ENCODE measurements at regions of chr11 and their contacts with region 1.

Region 1: DNA sequence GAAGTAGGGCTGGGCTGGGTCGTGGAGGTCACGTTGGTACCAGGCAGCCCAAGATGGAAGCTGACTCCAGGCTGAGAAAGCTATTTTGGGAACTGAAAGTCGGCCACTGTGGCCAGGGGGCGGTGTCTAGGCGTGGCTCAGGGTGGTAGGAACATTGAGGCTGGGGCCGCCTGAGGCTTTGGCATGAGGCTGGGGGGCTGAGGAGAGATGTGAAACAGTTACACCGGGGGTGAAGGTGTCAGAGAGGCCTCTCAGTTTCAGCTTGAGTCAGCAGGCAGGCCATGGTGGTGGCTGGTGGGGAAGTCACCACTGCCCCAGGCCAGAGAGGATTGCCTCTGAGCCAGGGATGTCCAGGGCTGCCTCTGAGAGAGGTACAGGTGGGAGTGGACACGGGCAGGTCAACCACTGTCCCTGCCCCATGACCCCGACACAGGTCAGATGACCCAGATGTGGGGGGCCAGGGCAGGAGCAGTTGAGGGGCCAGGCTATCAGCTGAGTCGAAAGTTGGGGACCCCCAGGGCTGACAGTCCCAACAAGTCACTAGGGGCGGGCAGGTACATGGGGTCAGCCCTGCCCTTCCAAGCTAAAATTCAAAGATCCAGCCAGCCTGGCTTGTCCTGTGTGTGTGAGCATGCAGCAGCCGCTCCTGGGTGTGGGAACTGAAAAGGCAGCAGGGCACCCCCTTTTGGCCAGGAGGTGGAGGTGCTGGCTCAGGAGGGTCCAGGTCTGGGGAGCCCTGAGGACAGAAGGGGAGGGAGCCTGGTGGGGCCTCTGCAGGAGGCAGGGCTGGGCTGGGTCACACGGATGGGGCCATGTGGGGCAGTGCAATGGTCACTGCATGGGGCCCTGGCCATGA is 7.2 kb downstream of the KCNK7 start:
- DNase-seq: peak; percentile 78 to 82 (median 78)
- H3K4me3 ChIP-seq: no peak overlapping the region
- H3K4me3 Mint-ChIP-seq: peak overlapping the region in 3 of 8 donors; percentile 11 to 46 (median 25)
- H3K27ac ChIP-seq: peak overlapping the region; percentile 57
- H3K27ac Mint-ChIP-seq: peak overlapping the region; percentile 77 to 91 (median 87)
- H3K4me1 ChIP-seq: peaks cover 17% of the 10 kb centered on the region
- H3K4me1 Mint-ChIP-seq: peaks cover 13 to 33% (median 20%) of the 10 kb centered on the region in 4 donors
- H3K27me3 ChIP-seq: no peaks in the 10 kb centered on the region
- H3K27me3 Mint-ChIP-seq: no peaks in the 10 kb centered on the region

Region 2: DNA sequence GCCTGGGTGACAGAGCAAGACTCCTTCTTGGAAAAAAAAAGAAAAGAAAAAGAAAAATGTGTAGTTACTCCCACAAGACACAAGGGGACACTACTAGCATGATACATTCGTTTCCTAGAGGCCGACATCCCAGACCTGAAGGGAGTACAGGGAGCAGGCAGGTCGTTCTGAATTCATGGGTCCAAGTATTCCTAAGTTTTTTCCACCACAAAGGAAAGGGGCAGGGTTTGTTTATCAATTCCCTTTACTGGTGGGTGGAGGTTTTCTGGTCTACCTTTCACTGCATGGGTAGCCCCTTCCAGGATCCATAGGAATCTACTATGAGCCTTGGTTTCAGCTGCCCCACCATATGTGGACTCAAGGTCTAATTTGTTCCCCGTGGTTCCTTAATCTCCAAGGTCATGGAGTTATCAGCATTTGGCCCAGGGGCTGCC is 222.1 kb before region 1 on chr11:
- CTCF ChIA-PET with region 1: no interaction called
- POLR2A ChIA-PET with region 1: no interaction called
- intact Hi-C with region 1: loop called (anchors 5 kb)
- DNase-seq: peak; percentile 59 to 69 (median 64)
- H3K4me3 ChIP-seq: no peak overlapping the region
- H3K4me3 Mint-ChIP-seq: no peak overlapping the region
- H3K27ac ChIP-seq: no peak overlapping the region
- H3K27ac Mint-ChIP-seq: no peak overlapping the region
- H3K4me1 ChIP-seq: no peaks in the 10 kb centered on the region
- H3K4me1 Mint-ChIP-seq: peaks cover 0 to 3% (median 1%) of the 10 kb centered on the region in 4 donors
- H3K27me3 ChIP-seq: no peaks in the 10 kb centered on the region
- H3K27me3 Mint-ChIP-seq: no peaks in the 10 kb centered on the region

Region 3: DNA sequence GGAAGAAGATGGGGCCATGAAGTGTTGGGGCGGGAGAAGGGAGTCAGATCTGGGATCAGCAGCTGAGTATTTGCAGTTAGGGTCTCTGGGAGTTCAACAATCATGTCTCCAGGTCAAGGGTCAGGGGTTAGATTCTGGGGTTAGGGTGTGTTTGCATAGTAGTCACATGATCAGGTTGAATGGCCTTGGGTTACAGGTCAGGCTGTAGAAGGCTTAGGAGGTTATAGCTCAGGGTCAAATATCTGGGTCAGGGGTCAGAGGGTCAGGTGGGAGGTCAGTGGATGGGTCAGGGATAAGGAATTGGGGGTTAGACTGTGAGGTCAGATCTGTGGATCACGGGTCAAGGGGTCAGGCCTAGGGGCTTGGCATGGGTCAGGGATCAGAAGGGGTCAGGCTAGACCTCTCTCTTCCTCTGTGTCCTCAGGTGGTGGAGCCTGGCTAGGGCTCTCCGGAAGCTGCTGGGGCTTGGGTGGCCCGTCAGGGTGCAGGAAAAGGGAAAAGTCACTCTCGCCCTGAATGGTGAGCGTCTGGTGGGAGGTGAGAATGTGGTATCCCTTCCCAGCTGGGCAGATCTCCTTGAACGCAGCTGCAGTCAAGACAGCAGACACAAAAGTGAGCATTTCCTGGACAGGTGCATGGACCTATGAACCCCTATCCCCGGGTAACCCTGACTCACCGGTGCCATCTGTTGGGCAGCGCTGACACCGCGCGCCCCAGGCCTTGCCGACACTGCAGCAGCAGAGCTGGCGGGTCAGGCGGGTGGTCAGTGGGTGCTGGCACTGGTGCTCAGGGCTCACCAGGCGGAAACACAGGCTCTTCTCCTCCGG is 36.6 kb before region 1 on chr11:
- CTCF ChIA-PET with region 1: interaction called, 124 read pairs
- POLR2A ChIA-PET with region 1: interaction called, 110 read pairs
- intact Hi-C with region 1: no loop called
- DNase-seq: peak; percentile 56 to 65 (median 61)
- H3K4me3 ChIP-seq: no peak overlapping the region
- H3K4me3 Mint-ChIP-seq: peak overlapping the region in 7 of 8 donors; percentile 17 to 65 (median 50)
- H3K27ac ChIP-seq: no peak overlapping the region
- H3K27ac Mint-ChIP-seq: peak overlapping the region; percentile 77 to 92 (median 89)
- H3K4me1 ChIP-seq: peaks cover 77% of the 10 kb centered on the region
- H3K4me1 Mint-ChIP-seq: peaks cover 47 to 84% (median 66%) of the 10 kb centered on the region in 4 donors
- H3K27me3 ChIP-seq: no peaks in the 10 kb centered on the region
- H3K27me3 Mint-ChIP-seq: no peaks in the 10 kb centered on the region

Measured in CD4-positive, alpha-beta memory T cell (primary cell).